Panc1 (cell line): ENCODE measurements at regions of chr6 and their contacts with region 1.

Region 1: DNA sequence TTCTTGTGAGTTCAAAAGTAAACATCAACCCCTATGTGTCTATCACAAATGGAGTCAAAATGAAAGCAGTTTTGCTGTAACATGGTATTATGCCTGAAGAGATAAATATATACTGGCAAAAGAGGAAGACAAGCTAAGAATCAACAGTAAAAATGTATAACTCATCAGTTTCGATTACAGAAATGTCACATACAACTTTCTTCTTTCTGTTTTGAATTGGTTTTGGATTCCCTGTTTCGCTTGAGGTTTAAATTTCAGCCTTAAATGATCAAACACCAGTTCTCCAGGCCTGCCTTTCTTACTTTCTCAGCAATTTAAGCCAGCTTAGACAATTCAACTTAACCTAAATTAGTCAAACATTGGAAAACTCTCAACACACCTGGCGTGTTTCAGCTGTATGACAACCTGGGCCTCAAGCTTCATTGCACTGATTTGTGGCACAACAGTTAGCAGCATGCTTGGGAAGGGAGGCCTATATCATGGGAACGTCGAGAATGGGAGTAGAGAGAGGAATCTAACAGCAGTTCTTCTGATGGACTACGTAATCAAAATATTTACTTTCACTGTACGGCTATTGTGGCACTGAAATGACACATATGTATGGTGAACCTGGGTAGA is 51.9 kb upstream of the MARCKS start:
- DNase-seq: no peak
- ATAC-seq: no peak
- H3K4me3 ChIP-seq: no peak overlapping the region
- H3K27ac ChIP-seq: no peak overlapping the region
- H3K4me1 ChIP-seq: no peaks in the 10 kb centered on the region
- H3K27me3 ChIP-seq: no peaks in the 10 kb centered on the region
- CTCF ChIP-seq: no peak

Region 2: GRCh38 chr6:113723182-113723581 is 82.1 kb before region 1 on chr6:
- CTCF ChIA-PET with region 1: no interaction called
- POLR2A ChIA-PET with region 1: interaction called, 17 read pairs
- in situ Hi-C with region 1: no loop called
- intact Hi-C with region 1: no loop called
- DNase-seq: no peak
- ATAC-seq: no peak
- H3K4me3 ChIP-seq: no peak overlapping the region
- H3K27ac ChIP-seq: no peak overlapping the region
- H3K4me1 ChIP-seq: no peaks in the 10 kb centered on the region
- H3K27me3 ChIP-seq: no peaks in the 10 kb centered on the region
- CTCF ChIP-seq: no peak

Region 3: GRCh38 chr6:113980937-113981554 is 175.8 kb after region 1 on chr6:
- CTCF ChIA-PET with region 1: no interaction called
- POLR2A ChIA-PET with region 1: no interaction called
- in situ Hi-C with region 1: no loop called
- intact Hi-C with region 1: no loop called
- DNase-seq: no peak
- ATAC-seq: peak; percentile 92
- H3K4me3 ChIP-seq: no peak overlapping the region
- H3K27ac ChIP-seq: no peak overlapping the region
- H3K4me1 ChIP-seq: no peaks in the 10 kb centered on the region
- H3K27me3 ChIP-seq: no peaks in the 10 kb centered on the region
- CTCF ChIP-seq: peak; percentile 80